ENCODE measurements at regions of chr17 and their contacts with region 1.

Region 1: GRCh38 chr17:17836250-17836817 is 452 bp downstream of the SREBF1 start:
- DNase-seq: peak; percentile 98 to 99 (median 99)
- H3K4me3 ChIP-seq: peak overlapping the region; percentile 77 to 99 (median 92)
- H3K27ac ChIP-seq: peak overlapping the region; percentile 91 to 100 (median 100)
- H3K27me3 ChIP-seq: no peaks in the 10 kb centered on the region
- CTCF ChIP-seq: peak in 12 of 56 donors; percentile 9 to 35 (median 20)

Region 2: DNA sequence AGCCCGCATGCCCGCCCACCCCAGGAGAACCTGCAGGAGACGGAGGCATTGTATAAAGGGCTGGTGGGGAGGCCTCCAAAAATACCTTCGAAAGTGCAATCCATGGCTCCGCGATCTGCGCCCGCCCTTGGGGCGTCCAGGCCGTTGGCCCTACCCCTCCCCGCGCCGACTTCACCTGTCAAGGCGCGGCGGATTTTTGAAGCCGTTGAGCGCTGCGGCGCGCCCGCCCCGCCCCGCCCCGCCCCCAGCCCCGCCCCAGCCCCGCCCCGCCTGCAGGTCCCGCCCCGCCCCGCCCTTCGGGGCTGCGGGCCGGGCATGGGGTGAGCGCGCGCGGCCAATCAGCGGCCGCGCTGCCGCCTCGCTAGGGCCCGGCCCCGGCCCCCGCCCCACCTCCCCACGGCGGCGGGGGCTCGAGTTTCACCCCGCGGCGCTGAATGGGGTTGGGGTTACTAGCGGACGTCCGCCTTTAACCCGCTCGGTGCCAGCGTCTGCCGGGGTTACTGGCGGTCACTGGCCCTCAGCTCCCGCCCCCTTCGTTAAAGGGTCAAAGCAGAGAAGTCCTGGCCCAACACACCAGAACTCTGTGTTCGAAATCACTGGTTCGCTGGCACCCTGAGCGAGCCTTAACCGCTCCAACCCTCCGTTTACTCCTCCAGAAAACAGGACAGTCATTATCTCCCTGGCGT is 12.8 kb before region 1 on chr17:
- intact Hi-C with region 1: loop called (anchors 1 to 2 kb)
- DNase-seq: peak; percentile 77 to 92 (median 86)
- H3K4me3 ChIP-seq: peak overlapping the region; percentile 52 to 90 (median 73)
- H3K27ac ChIP-seq: peak overlapping the region; percentile 63 to 99 (median 94)
- H3K27me3 ChIP-seq: no peaks in the 10 kb centered on the region
- CTCF ChIP-seq: no peak

Region 3: DNA sequence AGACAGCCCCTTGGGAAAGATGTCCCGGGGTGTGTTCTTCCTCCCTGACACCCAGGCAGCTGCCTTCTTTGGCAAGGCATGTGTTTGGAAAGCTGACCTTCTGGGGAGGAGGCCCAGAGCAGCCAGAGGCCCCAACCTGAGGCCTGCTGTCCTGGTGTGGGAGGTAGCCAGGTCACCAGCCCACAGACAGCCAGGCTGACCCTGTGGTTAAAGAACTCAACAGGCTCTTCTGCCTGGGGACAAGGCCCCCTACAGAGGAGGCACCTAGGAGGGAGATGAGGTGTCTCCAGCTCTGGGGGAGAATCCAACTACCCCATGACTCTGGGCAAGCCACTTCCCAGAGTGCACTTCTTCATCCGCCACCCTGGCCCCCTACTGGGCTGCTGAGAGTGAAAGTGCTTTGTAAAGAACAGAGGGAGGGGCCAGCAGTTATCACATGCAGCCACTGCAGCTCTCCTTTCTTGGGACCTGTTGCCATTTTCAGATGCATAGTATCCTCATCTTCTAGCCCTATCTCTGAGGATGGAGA is 13.6 kb after region 1 on chr17:
- intact Hi-C with region 1: no loop called
- DNase-seq: peak in 2 of 10 donors; percentile 54 to 56
- H3K4me3 ChIP-seq: no peak overlapping the region
- H3K27ac ChIP-seq: peak overlapping the region; percentile 52 to 97 (median 86)
- H3K27me3 ChIP-seq: no peaks in the 10 kb centered on the region
- CTCF ChIP-seq: peak in 46 of 56 donors; percentile 9 to 62 (median 37)